ENCODE measurements at regions of chr19 and their contacts with region 1.

Region 1: GRCh38 chr19:47514869-47515588 is at the start of gene NAPA:
- DNase-seq: peak; percentile 100
- H3K4me3 ChIP-seq: peak within 1 kb of the TSS; percentile 95 to 98
- H3K4me3 Mint-ChIP-seq: peak within 1 kb of the TSS; percentile 97 to 99 (median 98)
- H3K27ac ChIP-seq: peak within 1 kb of the TSS; percentile 97
- H3K27ac Mint-ChIP-seq: peak within 1 kb of the TSS; percentile 97 to 99 (median 98)
- H3K4me1 ChIP-seq: peaks cover 64% of the 10 kb centered on the region
- H3K4me1 Mint-ChIP-seq: peaks cover 50 to 87% (median 66%) of the 10 kb centered on the region in 4 donors
- H3K27me3 ChIP-seq: no peaks in the 10 kb centered on the region
- H3K27me3 Mint-ChIP-seq: no peaks in the 10 kb centered on the region
- total RNA-seq, gene NAPA: 84.1 to 88.1 TPM

Region 2: DNA sequence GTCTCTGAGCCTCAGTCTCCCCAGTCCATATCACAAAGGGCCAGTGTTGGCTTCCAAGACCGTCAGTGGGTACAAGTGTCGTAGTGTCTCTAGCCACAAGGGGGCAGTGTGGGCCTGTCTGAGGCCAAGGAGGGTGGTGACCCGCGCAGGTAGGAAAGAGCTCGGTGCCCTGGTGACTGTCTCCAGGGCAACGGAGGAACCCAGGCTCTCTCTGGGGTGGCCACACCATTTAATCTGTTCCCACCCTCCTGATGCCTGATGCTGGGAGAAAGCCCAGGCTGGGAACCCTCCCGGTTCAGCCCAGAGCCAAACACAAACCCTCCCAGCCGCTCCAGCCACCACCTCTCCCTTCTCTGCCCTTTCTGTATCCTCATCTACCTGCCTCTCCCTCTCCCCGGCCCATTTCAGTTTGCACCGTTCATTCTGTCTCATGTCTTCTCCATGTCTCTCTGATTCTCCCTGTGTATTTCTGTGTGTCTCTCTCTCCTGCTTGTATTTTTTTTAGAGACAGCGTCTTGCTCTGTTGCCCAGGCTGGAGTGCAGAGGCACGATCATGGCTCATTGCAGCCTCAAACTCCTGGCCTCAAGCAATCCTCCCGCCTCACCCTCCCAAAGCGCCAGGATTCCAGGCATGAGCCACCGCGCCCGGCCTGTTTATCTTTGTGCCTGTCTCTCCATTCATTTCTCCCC is 78.2 kb before region 1 on chr19:
- CTCF ChIA-PET with region 1: interaction called, 28 read pairs
- POLR2A ChIA-PET with region 1: interaction called, 4 read pairs
- intact Hi-C with region 1: loop called (anchors 1 kb)
- DNase-seq: peak; percentile 71 to 82 (median 78)
- H3K4me3 ChIP-seq: no peak overlapping the region
- H3K4me3 Mint-ChIP-seq: peak overlapping the region in 4 of 8 donors; percentile 14 to 46 (median 34)
- H3K27ac ChIP-seq: no peak overlapping the region
- H3K27ac Mint-ChIP-seq: peak overlapping the region in 5 of 7 donors; percentile 19 to 80 (median 46)
- H3K4me1 ChIP-seq: peaks cover 13% of the 10 kb centered on the region
- H3K4me1 Mint-ChIP-seq: peaks cover 7 to 21% (median 17%) of the 10 kb centered on the region in 4 donors
- H3K27me3 ChIP-seq: peaks cover 6% of the 10 kb centered on the region
- H3K27me3 Mint-ChIP-seq: peaks cover 24 to 37% of the 10 kb centered on the region in 2 donors

Region 3: GRCh38 chr19:47471733-47472457 is 43.1 kb before region 1 on chr19 and contains the start of gene SLC8A2:
- CTCF ChIA-PET with region 1: no interaction called
- POLR2A ChIA-PET with region 1: no interaction called
- intact Hi-C with region 1: no loop called
- DNase-seq: peak; percentile 61 to 82 (median 71)
- H3K4me3 ChIP-seq: no peak within 1 kb of the TSS
- H3K4me3 Mint-ChIP-seq: peak within 1 kb of the TSS in 5 of 8 donors; percentile 18 to 66 (median 52)
- H3K27ac ChIP-seq: no peak within 1 kb of the TSS
- H3K27ac Mint-ChIP-seq: peak within 1 kb of the TSS in 4 of 7 donors; percentile 64 to 85 (median 76)
- H3K4me1 ChIP-seq: peaks cover 12% of the 10 kb centered on the region
- H3K4me1 Mint-ChIP-seq: peaks cover 10 to 14% (median 11%) of the 10 kb centered on the region in 4 donors
- H3K27me3 ChIP-seq: peaks cover 37% of the 10 kb centered on the region
- H3K27me3 Mint-ChIP-seq: peaks cover 41% of the 10 kb centered on the region in 2 donors
- total RNA-seq, gene SLC8A2: not detected

Region 4: GRCh38 chr19:47483800-47484690 is 31.0 kb before region 1 on chr19 and contains the start of gene KPTN:
- CTCF ChIA-PET with region 1: interaction called, 16 read pairs
- POLR2A ChIA-PET with region 1: interaction called, 15 read pairs
- intact Hi-C with region 1: loop called (anchors 1 kb)
- DNase-seq: peak; percentile 87 to 92 (median 90)
- H3K4me3 ChIP-seq: peak within 1 kb of the TSS; percentile 44 to 72
- H3K4me3 Mint-ChIP-seq: peak within 1 kb of the TSS; percentile 91 to 100 (median 98)
- H3K27ac ChIP-seq: peak within 1 kb of the TSS; percentile 86
- H3K27ac Mint-ChIP-seq: peak within 1 kb of the TSS; percentile 96 to 100 (median 99)
- H3K4me1 ChIP-seq: peaks cover 21% of the 10 kb centered on the region
- H3K4me1 Mint-ChIP-seq: peaks cover 16 to 42% (median 22%) of the 10 kb centered on the region in 4 donors
- H3K27me3 ChIP-seq: no peaks in the 10 kb centered on the region
- H3K27me3 Mint-ChIP-seq: no peaks in the 10 kb centered on the region
- total RNA-seq, gene KPTN: 4.0 to 4.3 TPM

Region 5: GRCh38 chr19:47573071-47574026 is 58.3 kb after region 1 on chr19 and contains the start of gene ZNF541:
- CTCF ChIA-PET with region 1: interaction called, 13 read pairs
- POLR2A ChIA-PET with region 1: interaction called, 3 read pairs
- intact Hi-C with region 1: no loop called
- DNase-seq: peak; percentile 87 to 90 (median 88)
- H3K4me3 ChIP-seq: peak within 1 kb of the TSS in 1 of 2 donors; percentile 46
- H3K4me3 Mint-ChIP-seq: peak within 1 kb of the TSS; percentile 59 to 79 (median 70)
- H3K27ac ChIP-seq: no peak within 1 kb of the TSS
- H3K27ac Mint-ChIP-seq: peak within 1 kb of the TSS; percentile 37 to 87 (median 70)
- H3K4me1 ChIP-seq: peaks cover 27% of the 10 kb centered on the region
- H3K4me1 Mint-ChIP-seq: peaks cover 25 to 45% (median 34%) of the 10 kb centered on the region in 4 donors
- H3K27me3 ChIP-seq: no peaks in the 10 kb centered on the region
- H3K27me3 Mint-ChIP-seq: no peaks in the 10 kb centered on the region
- total RNA-seq, gene ZNF541: 0.53 to 0.79 TPM

Region 6: DNA sequence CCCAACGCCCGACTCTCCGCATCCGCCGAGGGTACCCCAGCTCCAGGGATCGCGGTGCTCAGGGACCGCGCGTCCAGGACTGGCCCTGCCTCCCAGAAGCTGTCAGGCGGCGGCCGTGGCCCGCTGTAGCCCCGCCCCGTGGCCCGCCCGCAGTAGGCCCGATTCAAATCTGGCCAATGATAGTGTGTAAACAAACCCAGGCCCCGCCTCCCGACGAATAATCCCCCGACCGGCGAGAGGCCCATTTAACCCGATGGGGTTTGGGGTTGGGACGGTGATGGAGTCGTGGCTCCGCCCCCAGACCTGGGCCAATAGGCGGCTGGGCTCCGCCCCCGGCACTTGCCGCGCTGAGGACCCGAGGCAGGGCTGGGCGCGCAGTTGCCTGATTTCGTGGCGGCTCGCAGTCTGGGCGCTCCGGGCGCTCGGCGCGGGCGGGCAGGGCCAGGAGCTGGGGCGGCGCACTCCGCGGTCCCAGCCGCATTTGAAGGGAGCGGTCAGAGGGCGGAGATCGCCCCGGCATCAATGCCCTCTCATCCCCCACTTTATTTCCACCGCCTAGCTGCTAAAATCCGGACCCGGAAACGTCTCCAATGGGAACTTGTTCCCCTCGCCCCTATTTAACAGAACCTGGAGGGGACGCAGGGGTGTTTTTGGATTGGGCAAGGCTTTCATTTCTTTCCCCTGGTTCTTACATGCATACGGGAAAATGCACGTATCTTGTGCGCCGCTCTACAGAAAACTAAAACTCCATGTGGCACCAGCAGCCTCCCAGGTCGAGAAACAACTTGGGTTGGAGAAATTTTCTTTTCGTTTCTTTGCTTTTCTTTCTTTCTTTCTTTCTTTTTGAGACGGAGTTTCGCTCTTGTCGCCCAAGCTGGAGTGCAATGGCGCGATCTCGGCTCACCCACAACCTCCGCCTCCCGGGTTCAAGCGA is 85.5 kb after region 1 on chr19:
- CTCF ChIA-PET with region 1: interaction called, 3 read pairs
- POLR2A ChIA-PET with region 1: interaction called, 32 read pairs
- intact Hi-C with region 1: loop called (anchors 1 kb)
- DNase-seq: peak; percentile 96 to 99 (median 98)
- H3K4me3 ChIP-seq: peak overlapping the region; percentile 49 to 67
- H3K4me3 Mint-ChIP-seq: peak overlapping the region; percentile 85 to 90 (median 86)
- H3K27ac ChIP-seq: peak overlapping the region; percentile 74
- H3K27ac Mint-ChIP-seq: peak overlapping the region; percentile 80 to 94 (median 90)
- H3K4me1 ChIP-seq: peaks cover 19% of the 10 kb centered on the region
- H3K4me1 Mint-ChIP-seq: peaks cover 6 to 40% (median 20%) of the 10 kb centered on the region in 4 donors
- H3K27me3 ChIP-seq: no peaks in the 10 kb centered on the region
- H3K27me3 Mint-ChIP-seq: no peaks in the 10 kb centered on the region

Region 7: DNA sequence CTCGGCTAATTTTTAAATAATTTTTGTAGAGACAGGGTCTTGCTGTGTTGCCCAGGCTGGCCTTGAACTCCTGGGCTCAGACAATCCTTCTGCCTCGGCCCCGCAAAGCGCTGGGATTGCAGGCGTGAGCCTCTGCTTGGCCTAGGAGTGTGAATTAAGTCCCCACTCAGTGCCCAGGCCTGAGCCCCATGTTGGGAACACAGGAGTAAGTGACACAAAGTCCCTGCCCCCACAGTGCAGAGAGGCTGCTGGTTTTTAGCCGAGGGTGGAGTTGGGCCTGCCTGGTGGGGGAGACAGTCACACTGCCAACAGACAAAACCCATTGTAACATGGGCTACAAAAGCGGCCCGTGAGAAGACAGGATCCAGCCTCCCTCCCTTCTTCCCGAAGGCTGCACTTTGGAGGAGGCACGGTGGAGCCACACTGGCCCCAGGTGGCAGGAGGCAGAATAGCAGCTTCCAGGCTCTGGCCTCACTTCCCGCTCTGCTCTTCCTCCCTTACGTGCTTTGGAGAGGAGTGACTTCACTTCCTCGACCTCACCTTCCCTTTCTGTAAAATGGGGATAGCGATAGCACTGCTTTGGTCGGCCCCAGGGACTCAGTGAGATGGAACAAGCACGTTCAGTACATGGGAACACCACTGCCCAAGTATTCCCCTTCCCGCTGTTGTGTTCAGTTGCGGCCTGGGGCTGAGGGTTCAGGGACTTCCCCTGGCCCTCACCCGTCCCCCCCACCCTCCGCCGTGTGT is 183.0 kb after region 1 on chr19:
- CTCF ChIA-PET with region 1: interaction called, 14 read pairs
- POLR2A ChIA-PET with region 1: interaction called, 5 read pairs
- intact Hi-C with region 1: loop called (anchors 1 kb)
- DNase-seq: peak; percentile 46 to 54 (median 51)
- H3K4me3 ChIP-seq: no peak overlapping the region
- H3K4me3 Mint-ChIP-seq: no peak overlapping the region
- H3K27ac ChIP-seq: no peak overlapping the region
- H3K27ac Mint-ChIP-seq: no peak overlapping the region
- H3K4me1 ChIP-seq: no peaks in the 10 kb centered on the region
- H3K4me1 Mint-ChIP-seq: peaks cover 0 to 4% (median 2%) of the 10 kb centered on the region in 4 donors
- H3K27me3 ChIP-seq: no peaks in the 10 kb centered on the region
- H3K27me3 Mint-ChIP-seq: no peaks in the 10 kb centered on the region